IMR-90 (cell line): ENCODE measurements at regions of chr1 and their contacts with region 1.

Region 1: GRCh38 chr1:205273551-205273982 is 45.8 kb downstream of the TMCC2 start:
- DNase-seq: peak; percentile 76
- ATAC-seq: peak; percentile 88
- H3K4me3 ChIP-seq: no peak overlapping the region
- H3K27ac ChIP-seq: no peak overlapping the region; the same call in 1 of the 2 replicates
- H3K4me1 ChIP-seq: peaks cover 15% of the 10 kb centered on the region
- H3K27me3 ChIP-seq: no peaks in the 10 kb centered on the region
- CTCF ChIP-seq: peak; percentile 97
- POLR2A ChIP-seq: peak; percentile 43; the same call in 1 of the 2 replicates
- RAD21 ChIP-seq: peak; percentile 97

Region 2: DNA sequence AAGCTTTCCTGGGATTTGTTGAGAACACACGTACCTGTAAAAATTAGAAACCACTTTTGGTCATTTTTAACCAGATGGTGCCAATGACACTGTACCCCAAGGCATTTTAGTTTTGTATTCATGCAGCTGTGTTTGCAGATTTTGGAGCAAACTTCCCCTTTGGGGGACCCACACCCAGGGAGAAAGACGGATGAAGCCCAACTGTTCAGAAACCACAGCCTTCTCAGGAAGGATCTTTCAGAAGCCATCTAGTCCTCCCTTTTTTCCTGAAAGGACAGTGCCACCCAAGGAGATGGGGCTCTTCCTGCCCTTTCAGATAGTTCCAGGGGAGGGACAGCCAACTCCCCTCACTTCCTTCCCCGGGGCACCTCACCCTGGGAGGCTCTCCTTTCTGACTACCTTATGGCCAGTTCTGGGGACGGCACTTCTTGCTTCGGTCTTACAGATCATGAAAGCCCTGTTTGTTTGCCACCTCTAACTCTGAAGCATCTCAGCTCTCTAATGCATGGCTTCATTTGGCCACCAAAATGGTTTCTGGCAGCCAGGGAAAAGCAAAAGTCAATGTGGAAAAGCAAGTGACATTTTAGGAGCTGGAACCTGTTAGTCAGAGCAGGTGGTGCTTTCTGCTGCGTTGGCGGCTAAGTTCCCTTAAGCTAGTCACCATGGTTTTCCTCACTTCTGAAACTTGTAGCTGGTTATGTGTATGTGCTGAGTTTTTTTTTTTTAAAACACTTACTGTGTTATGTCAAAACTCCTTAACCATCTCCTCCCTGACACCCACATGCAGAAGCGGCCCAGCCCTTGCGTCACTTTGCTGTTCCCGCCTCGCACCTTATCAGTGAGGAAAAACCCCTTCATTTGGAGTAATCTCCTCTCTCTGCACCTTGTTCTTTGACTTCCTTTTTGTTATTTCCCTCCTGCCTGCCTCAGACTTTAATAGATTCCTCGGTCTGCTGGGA is 35.8 kb before region 1 on chr1:
- CTCF ChIA-PET with region 1: no interaction called
- POLR2A ChIA-PET with region 1: no interaction called
- dilution Hi-C with region 1: no loop called
- in situ Hi-C with region 1: no loop called
- intact Hi-C with region 1: no loop called
- DNase-seq: no peak
- ATAC-seq: no peak
- H3K4me3 ChIP-seq: no peak overlapping the region
- H3K27ac ChIP-seq: no peak overlapping the region
- H3K4me1 ChIP-seq: peaks cover 8% of the 10 kb centered on the region
- H3K27me3 ChIP-seq: no peaks in the 10 kb centered on the region
- CTCF ChIP-seq: no peak
- POLR2A ChIP-seq: no peak
- RAD21 ChIP-seq: no peak

Region 3: GRCh38 chr1:205300886-205301821 is 27.6 kb after region 1 on chr1:
- CTCF ChIA-PET with region 1: interaction called, 11 read pairs
- POLR2A ChIA-PET with region 1: no interaction called
- dilution Hi-C with region 1: no loop called
- in situ Hi-C with region 1: no loop called
- intact Hi-C with region 1: no loop called
- DNase-seq: peak; percentile 97
- ATAC-seq: peak; percentile 68
- H3K4me3 ChIP-seq: no peak overlapping the region
- H3K27ac ChIP-seq: peak overlapping the region; percentile 99
- H3K4me1 ChIP-seq: peaks cover 32% of the 10 kb centered on the region
- H3K27me3 ChIP-seq: no peaks in the 10 kb centered on the region
- CTCF ChIP-seq: no peak
- POLR2A ChIP-seq: peak; percentile 41; the same call in 1 of the 2 replicates
- RAD21 ChIP-seq: peak; percentile 33; the same call in 1 of the 2 replicates

Region 4: GRCh38 chr1:205321164-205321958 is 47.8 kb after region 1 on chr1 and contains the start of gene NUAK2:
- CTCF ChIA-PET with region 1: interaction called, 126 read pairs
- POLR2A ChIA-PET with region 1: interaction called, 5 read pairs
- dilution Hi-C with region 1: no loop called
- in situ Hi-C with region 1: loop called (anchors 5 kb)
- intact Hi-C with region 1: loop called (anchors 1 kb)
- DNase-seq: peak; percentile 90
- ATAC-seq: peak; percentile 92
- H3K4me3 ChIP-seq: peak within 1 kb of the TSS; percentile 94
- H3K27ac ChIP-seq: peak within 1 kb of the TSS; percentile 87
- H3K4me1 ChIP-seq: peaks cover 35% of the 10 kb centered on the region
- H3K27me3 ChIP-seq: no peaks in the 10 kb centered on the region
- CTCF ChIP-seq: peak; percentile 37
- POLR2A ChIP-seq: peak; percentile 94
- RAD21 ChIP-seq: peak; percentile 35
- total RNA-seq, gene NUAK2: 7.2 and 8.1 TPM in 2 replicates

Region 5: DNA sequence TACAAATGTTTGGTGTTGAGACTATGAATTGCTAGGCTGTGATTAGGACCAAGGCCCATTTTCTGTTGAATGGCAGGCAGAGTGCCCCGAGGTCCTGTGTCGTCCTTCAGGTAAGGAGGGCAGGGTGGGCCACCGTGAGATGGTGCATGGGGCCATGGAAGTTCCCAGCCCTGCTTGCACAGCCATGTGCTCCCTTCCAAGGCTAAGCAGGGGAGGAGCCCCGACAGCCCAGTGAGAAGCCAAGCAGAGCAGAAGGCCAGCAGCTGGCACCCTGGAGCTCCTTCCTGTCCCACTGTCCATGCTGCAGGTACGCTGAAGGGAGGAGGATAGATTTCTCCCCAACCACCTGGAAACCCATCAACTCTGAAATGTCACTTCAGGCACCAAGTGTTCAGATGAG is 56.2 kb after region 1 on chr1:
- CTCF ChIA-PET with region 1: interaction called, 126 read pairs
- POLR2A ChIA-PET with region 1: interaction called, 5 read pairs
- dilution Hi-C with region 1: no loop called
- in situ Hi-C with region 1: loop called (anchors 5 kb)
- intact Hi-C with region 1: loop called (anchors 1 kb)
- DNase-seq: no peak
- ATAC-seq: no peak
- H3K4me3 ChIP-seq: no peak overlapping the region
- H3K27ac ChIP-seq: no peak overlapping the region
- H3K4me1 ChIP-seq: peaks cover 12% of the 10 kb centered on the region
- H3K27me3 ChIP-seq: peaks cover 39% of the 10 kb centered on the region
- CTCF ChIP-seq: no peak
- POLR2A ChIP-seq: no peak
- RAD21 ChIP-seq: no peak

Region 6: DNA sequence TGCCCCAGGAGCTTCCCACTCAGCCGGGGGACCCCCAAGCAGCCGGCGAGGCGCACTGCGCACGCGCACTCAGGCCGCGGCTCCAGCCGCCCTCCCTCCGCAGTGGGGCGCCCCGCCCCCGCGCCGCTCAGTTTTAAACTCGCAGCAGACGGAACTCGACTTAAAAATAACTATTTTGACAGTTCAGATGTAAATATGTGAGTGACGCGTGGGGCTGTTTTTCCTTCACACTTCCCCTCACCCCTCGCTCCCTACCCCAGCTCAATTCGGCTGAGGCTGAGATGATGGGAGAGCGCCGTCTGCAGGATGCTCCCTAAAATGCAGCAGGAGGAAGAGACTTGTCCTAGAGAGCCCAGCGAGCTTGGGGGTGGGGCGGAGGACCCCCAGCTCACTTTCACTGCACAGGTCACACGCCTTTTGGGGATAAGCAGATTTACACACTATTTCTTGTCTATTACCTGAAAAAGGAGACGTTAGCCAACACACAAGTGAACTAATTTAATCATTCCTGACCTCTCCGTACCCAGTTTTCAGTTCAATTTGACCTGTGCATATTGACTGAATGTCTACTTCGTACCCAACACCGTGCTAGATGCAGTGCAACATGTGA is 157.2 kb after region 1 on chr1:
- CTCF ChIA-PET with region 1: no interaction called
- POLR2A ChIA-PET with region 1: no interaction called
- dilution Hi-C with region 1: no loop called
- in situ Hi-C with region 1: no loop called
- intact Hi-C with region 1: loop called (anchors 5 kb)
- DNase-seq: peak; percentile 33
- ATAC-seq: peak; percentile 91
- H3K4me3 ChIP-seq: peak overlapping the region; percentile 48
- H3K27ac ChIP-seq: no peak overlapping the region
- H3K4me1 ChIP-seq: no peaks in the 10 kb centered on the region
- H3K27me3 ChIP-seq: peaks cover 75% of the 10 kb centered on the region
- CTCF ChIP-seq: peak; percentile 75
- POLR2A ChIP-seq: no peak
- RAD21 ChIP-seq: peak; percentile 72

Region 7: GRCh38 chr1:205485338-205486228 is 212.0 kb after region 1 on chr1:
- CTCF ChIA-PET with region 1: interaction called, 7 read pairs
- POLR2A ChIA-PET with region 1: no interaction called
- dilution Hi-C with region 1: no loop called
- in situ Hi-C with region 1: loop called (anchors 10 kb)
- intact Hi-C with region 1: loop called (anchors 1 kb)
- DNase-seq: peak; percentile 59
- ATAC-seq: peak; percentile 95
- H3K4me3 ChIP-seq: no peak overlapping the region
- H3K27ac ChIP-seq: no peak overlapping the region
- H3K4me1 ChIP-seq: no peaks in the 10 kb centered on the region
- H3K27me3 ChIP-seq: peaks cover 46% of the 10 kb centered on the region
- CTCF ChIP-seq: peak; percentile 90
- POLR2A ChIP-seq: no peak
- RAD21 ChIP-seq: peak; percentile 92